ENCODE measurements at regions of chr3 and their contacts with region 1.

Region 1: GRCh38 chr3:183895296-183895695 is 10.6 kb upstream of the PARL start:
- DNase-seq: no peak
- ATAC-seq: peak; percentile 78

Region 2: DNA sequence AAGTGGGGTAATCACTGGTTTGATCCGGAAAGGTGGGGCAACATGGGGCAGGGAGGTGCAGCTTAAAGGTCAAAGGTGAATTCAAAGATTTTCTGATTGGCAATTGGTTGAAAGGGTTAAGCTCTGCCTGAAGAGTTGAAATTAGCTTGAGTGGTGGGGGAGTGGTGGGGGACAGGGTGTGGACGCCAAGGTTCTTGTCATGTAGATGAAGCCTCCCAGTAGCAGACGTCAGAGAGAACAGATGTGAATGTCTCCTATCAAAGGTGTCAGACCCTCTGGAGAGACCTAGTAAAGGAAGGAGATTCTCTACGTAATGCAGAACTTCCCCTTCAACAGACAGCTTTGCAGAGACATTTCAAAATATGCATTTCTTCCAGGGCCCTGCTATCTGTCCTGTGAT is 59.6 kb after region 1 on chr3:
- intact Hi-C with region 1: no loop called
- DNase-seq: no peak
- ATAC-seq: no peak

Region 3: GRCh38 chr3:184135149-184135910 is 240.0 kb after region 1 on chr3 and contains the start of gene EIF2B5:
- intact Hi-C with region 1: loop called (anchors 10 kb)
- DNase-seq: peak; percentile 92
- ATAC-seq: peak; percentile 97
- total RNA-seq, gene EIF2B5: 30.6 TPM

Region 4: GRCh38 chr3:184832044-184832443 is 936.7 kb after region 1 on chr3:
- intact Hi-C with region 1: no loop called
- DNase-seq: no peak
- ATAC-seq: no peak

Measured in sciatic nerve (tissue), 2 donors.